Activated CD4-positive, alpha-beta memory T cell treated with anti-CD3 and anti-CD28 coated beads, Interleukin-2, amount 10 ng/mL, durations not matched to agents 7 days and 5 days (primary cell): ENCODE measurements at regions of chr7 and their contacts with region 1.

Region 1: GRCh38 chr7:51141451-51142003 is 175.1 kb downstream of the COBL start:
- DNase-seq: no peak
- H3K4me3 Mint-ChIP-seq: no peak overlapping the region
- H3K27ac Mint-ChIP-seq: no peak overlapping the region
- H3K4me1 Mint-ChIP-seq: peaks cover 28% of the 10 kb centered on the region
- H3K27me3 Mint-ChIP-seq: peaks cover 13% of the 10 kb centered on the region

Region 2: DNA sequence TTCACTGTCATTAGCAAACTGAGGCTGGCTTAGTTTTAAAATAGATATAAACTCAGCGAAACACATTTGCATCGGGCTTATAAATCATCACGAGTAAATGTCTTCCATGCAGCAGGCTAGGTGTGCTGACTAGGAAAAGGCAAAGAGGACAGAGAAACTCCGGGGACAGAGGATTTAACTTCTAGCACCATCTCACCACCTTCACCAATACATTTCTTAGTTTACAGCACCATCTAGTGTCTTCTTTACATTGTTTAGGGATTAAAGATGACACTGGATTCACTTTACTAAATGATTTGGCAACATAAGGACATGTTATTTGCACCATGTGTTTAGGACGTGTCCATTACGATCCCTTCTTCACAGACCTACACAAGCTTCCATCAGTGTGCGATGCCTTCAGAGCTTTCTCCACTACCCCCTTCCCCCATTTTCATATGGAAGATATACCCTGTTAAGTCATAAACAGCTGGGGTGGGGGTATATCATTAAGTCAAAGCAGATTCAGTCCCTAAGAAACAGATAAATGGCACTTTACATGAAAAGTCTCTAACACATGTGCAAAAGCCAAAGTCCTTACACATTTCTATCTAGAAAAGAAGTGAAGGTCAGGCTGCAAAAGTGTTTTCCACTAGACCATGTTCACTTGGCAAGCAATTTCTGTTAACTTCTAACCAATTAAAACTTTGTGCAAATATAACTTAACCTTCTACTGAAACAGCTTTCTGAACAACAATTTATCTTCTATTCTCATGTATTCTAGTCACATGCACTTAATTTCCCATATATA is 462.1 kb before region 1 on chr7:
- CTCF ChIA-PET with region 1: interaction called, 11 read pairs
- POLR2A ChIA-PET with region 1: no interaction called
- DNase-seq: no peak
- H3K4me3 Mint-ChIP-seq: no peak overlapping the region
- H3K27ac Mint-ChIP-seq: no peak overlapping the region
- H3K4me1 Mint-ChIP-seq: peaks cover 2% of the 10 kb centered on the region
- H3K27me3 Mint-ChIP-seq: no peaks in the 10 kb centered on the region

Region 3: DNA sequence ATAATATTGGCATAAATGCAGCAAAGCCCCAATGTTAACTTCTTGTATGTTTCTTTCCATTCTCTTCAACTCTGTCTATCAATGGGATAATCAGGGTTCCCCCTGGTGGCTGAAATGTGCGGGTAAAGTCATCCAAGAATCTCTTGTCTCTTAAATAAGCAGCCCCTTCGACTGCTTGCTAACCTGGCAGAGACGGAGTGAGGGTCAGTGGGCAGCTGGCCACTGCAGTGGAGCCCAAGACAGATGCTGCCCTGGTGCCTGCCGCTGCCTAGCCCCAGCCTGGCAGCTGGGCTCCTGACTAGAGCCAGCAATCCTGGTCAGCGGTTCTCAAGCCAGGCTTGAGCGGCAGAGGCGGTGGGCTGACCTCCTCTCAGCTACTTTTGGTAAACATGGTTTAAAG is 73.8 kb before region 1 on chr7:
- CTCF ChIA-PET with region 1: interaction called, 12 read pairs
- POLR2A ChIA-PET with region 1: no interaction called
- DNase-seq: peak; percentile 57
- H3K4me3 Mint-ChIP-seq: no peak overlapping the region
- H3K27ac Mint-ChIP-seq: no peak overlapping the region
- H3K4me1 Mint-ChIP-seq: no peaks in the 10 kb centered on the region
- H3K27me3 Mint-ChIP-seq: no peaks in the 10 kb centered on the region

Region 4: GRCh38 chr7:51090411-51090810 is 51.1 kb before region 1 on chr7:
- CTCF ChIA-PET with region 1: no interaction called
- POLR2A ChIA-PET with region 1: no interaction called
- DNase-seq: no peak
- H3K4me3 Mint-ChIP-seq: no peak overlapping the region
- H3K27ac Mint-ChIP-seq: no peak overlapping the region
- H3K4me1 Mint-ChIP-seq: no peaks in the 10 kb centered on the region
- H3K27me3 Mint-ChIP-seq: peaks cover 15% of the 10 kb centered on the region

Region 5: DNA sequence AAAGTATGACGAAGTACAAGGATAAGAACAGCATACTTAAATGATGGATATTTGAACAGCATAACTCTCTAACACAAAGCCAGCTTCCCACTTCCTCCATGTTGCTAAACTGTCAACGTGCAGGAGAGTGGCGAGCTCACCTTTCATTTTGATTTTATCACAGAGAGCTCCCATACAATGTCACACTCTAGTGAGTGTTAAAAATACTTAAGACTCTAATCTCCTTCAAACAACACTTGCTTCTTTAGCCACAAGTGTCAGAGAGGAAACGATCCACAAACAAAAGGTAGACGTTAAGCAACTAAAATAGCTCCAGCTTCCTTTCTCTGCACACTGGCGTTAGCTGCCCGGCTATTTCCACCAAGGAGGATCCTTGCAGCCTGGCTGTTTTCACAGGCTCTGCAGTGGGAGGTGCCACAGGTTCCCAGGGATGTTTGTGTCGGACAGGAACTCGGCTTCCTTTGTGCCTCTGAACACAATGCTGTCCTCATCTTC is 19.5 kb before region 1 on chr7:
- CTCF ChIA-PET with region 1: interaction called, 13 read pairs
- POLR2A ChIA-PET with region 1: interaction called, 6 read pairs
- DNase-seq: no peak
- H3K4me3 Mint-ChIP-seq: peak overlapping the region; percentile 25
- H3K27ac Mint-ChIP-seq: peak overlapping the region; percentile 69
- H3K4me1 Mint-ChIP-seq: peaks cover 34% of the 10 kb centered on the region
- H3K27me3 Mint-ChIP-seq: peaks cover 4% of the 10 kb centered on the region

Region 6: DNA sequence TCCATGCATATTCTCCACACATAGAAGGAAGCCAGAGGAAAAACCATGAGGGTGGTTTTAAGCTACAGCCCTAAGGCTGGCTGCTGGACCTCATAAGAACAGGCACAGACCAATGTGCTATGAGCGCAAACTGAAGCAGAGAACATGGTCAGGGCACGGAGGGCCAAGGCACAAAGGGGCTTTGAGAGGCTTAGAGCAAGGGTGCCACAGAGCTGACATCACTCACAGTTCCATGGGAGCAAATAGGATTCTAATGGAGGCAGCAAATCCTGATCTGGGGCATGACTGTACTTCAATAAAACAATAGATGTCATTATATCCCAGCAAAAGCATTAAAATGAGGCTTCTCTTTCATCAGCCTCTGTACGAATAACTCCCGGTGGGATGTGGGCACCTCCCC is 12.7 kb after region 1 on chr7:
- CTCF ChIA-PET with region 1: interaction called, 19 read pairs
- POLR2A ChIA-PET with region 1: no interaction called
- DNase-seq: no peak
- H3K4me3 Mint-ChIP-seq: no peak overlapping the region
- H3K27ac Mint-ChIP-seq: no peak overlapping the region
- H3K4me1 Mint-ChIP-seq: no peaks in the 10 kb centered on the region
- H3K27me3 Mint-ChIP-seq: peaks cover 17% of the 10 kb centered on the region

Region 7: GRCh38 chr7:51162724-51163329 is 21.3 kb after region 1 on chr7:
- CTCF ChIA-PET with region 1: interaction called, 59 read pairs
- POLR2A ChIA-PET with region 1: no interaction called
- DNase-seq: peak; percentile 78
- H3K4me3 Mint-ChIP-seq: no peak overlapping the region
- H3K27ac Mint-ChIP-seq: no peak overlapping the region
- H3K4me1 Mint-ChIP-seq: peaks cover 9% of the 10 kb centered on the region
- H3K27me3 Mint-ChIP-seq: peaks cover 32% of the 10 kb centered on the region